Mammary epithelial cell (primary cell): ENCODE measurements at regions of chr18 and their contacts with region 1.

Region 1: GRCh38 chr18:50388988-50389387 is 14.1 kb downstream of the SKA1 start:
- DNase-seq: no peak
- H3K4me3 ChIP-seq: no peak overlapping the region
- H3K27ac ChIP-seq: no peak overlapping the region
- H3K4me1 ChIP-seq: no peaks in the 10 kb centered on the region
- H3K27me3 ChIP-seq: no peaks in the 10 kb centered on the region
- CTCF ChIP-seq: no peak

Region 2: DNA sequence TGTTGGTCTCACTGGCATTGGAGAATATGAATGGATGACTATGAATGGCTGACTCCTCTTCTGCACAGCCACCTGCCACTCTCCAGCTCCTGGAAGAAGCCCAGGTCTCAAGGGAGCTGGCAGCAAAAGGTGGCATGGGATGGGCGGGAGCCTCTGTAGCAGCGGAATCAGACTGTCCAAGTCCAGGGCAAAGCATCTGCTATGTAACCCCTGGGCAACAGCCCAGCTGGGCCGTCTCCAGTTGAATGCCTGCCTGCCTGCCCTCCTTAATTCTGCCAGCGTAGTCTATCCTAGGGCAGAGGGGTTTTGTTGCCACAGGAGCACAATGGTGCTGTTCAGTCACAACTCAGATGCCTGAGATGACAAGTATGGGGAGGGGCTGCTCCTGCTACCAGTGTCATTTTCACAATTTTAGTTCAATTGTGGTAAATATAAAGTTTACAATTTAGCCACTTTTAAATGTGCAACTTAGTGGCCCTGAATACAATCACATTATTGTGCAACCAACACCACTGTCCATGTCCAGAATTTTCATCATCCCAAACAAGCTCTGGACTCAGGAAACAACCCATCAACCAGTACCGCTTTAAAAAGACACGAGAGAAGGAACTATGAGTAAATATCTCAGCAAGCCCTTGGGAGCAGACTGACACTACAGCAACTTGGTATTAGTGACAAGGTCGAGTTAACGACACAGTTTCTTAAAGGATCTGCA is 309.2 kb before region 1 on chr18:
- CTCF ChIA-PET with region 1: no interaction called
- dilution Hi-C with region 1: no loop called
- in situ Hi-C with region 1: no loop called
- intact Hi-C with region 1: no loop called
- DNase-seq: no peak
- H3K4me3 ChIP-seq: no peak overlapping the region
- H3K27ac ChIP-seq: no peak overlapping the region
- H3K4me1 ChIP-seq: peaks cover 25% of the 10 kb centered on the region
- H3K27me3 ChIP-seq: no peaks in the 10 kb centered on the region
- CTCF ChIP-seq: no peak

Region 3: DNA sequence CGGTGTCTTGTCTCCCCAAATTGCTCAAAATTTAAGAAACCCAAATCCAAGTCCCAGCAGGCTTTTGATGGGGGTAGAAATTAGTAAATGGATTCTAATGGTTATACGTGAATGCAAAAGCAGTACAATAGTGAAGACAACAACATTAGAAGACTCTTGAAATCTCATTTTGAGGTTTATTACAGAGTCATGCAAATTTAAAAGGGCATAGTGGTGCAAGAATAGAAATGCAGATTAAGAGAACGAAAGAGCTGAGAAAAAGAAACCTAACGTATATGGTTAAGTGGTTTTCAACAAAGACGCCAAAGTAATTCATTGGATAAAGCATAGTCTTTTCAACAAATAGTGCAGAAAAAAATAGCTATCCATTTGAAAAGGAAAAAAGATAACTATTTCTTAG is 68.3 kb before region 1 on chr18:
- CTCF ChIA-PET with region 1: no interaction called
- dilution Hi-C with region 1: no loop called
- in situ Hi-C with region 1: loop called in 1 of 2 experiments (anchors 10 kb)
- intact Hi-C with region 1: no loop called
- DNase-seq: no peak
- H3K4me3 ChIP-seq: no peak overlapping the region
- H3K27ac ChIP-seq: no peak overlapping the region
- H3K4me1 ChIP-seq: no peaks in the 10 kb centered on the region
- H3K27me3 ChIP-seq: peaks cover 7% of the 10 kb centered on the region
- CTCF ChIP-seq: no peak

Region 4: GRCh38 chr18:51957001-51957400 is 1568.0 kb after region 1 on chr18:
- CTCF ChIA-PET with region 1: interaction called, 40 read pairs
- dilution Hi-C with region 1: no loop called
- in situ Hi-C with region 1: no loop called
- intact Hi-C with region 1: no loop called
- DNase-seq: no peak
- H3K4me3 ChIP-seq: no peak overlapping the region
- H3K27ac ChIP-seq: no peak overlapping the region
- H3K4me1 ChIP-seq: no peaks in the 10 kb centered on the region
- H3K27me3 ChIP-seq: no peaks in the 10 kb centered on the region
- CTCF ChIP-seq: no peak